ENCODE measurements at regions of chr16 and their contacts with region 1.

Region 1: DNA sequence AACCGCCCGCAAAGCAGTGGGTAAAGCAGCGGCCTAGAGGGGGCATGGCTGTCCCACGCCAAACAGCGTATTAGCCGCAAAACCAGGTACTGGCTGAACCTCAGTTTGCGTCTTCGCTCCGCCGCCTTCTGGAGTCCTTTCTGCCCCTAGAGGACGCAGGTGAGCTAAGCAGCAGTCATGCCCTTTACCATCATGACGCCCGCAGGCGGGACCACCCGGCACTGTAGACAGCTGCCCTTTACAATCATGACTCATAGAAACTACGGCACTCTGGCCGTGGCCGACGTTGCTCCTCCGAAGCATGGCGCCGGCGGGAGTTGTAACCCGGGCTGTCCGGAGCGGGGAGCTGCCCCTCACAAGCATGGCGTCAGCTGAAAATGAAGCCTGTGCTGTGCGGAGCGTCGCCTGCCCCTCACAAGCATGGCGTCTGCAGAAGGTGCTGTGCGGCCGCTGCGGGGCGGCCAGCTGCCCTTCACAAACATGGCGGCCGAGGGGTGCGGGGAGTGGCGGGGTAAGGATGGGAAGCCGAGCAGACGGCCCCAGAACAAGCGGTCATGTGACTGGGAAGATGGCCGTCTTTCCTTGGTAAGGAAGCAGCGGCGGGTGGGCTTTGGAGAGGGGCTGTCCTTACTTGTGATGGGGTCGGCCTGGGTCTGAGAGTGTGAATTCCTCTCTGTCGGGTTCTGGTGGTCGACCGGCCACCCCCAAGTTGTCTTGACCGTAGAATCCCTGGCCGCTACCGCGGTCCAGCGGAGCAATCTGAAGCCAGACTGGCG is at the start of gene VPS35L:
- DNase-seq: peak; percentile 97
- ATAC-seq: peak; percentile 98
- H3K4me3 Mint-ChIP-seq: peak within 1 kb of the TSS; percentile 85
- H3K27ac Mint-ChIP-seq: peak within 1 kb of the TSS; percentile 94
- H3K4me1 Mint-ChIP-seq: peaks cover 19% of the 10 kb centered on the region
- H3K27me3 Mint-ChIP-seq: no peaks in the 10 kb centered on the region
- total RNA-seq, gene VPS35L: 61.5 to 65.1 TPM

Region 2: DNA sequence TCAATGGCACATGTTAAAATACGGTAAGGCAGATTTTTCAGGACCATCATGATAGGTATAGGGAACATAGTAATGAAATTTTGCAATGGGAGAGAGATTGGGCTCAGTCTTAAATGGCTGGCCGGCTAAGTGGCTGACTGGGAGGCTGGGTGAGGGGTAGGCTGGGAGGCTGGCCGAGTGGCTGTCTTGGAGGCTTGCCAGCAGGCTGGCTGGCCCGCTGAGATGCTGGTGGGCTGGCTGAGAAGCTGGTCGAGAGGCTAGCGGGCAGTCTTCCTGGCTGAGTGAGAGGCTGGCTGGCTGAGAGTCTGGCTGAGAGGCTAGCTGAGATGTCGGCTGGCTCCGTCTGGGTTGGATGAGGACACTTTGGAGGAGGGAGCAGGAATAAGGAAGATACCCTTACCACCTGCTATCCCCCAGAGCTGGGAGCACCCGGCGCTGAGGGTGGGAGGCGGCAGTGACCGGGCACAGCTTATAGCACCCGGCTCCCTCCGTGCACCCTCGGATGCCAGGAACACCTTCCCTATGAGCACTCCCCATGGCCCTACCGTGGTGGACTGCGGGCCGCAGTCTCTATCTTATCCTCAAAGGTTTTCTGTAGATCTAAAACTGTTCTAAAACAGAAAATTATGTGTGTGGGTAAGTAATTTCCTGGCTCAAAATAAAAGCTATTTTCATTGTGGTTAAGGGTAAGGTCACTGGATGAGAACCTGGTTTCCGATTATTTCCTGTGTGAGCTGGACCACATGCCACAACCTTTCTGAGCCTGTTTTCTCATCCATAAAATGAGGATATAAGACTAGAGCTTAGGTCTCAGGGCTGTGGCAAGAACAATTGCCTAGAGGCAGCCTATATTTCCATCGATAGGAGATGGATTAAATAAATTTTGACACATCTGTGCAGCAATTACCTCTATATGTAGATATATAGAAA is 172.2 kb before region 1 on chr16:
- CTCF ChIA-PET with region 1: no interaction called
- POLR2A ChIA-PET with region 1: no interaction called
- DNase-seq: peak; percentile 26
- ATAC-seq: peak; percentile 51
- H3K4me3 Mint-ChIP-seq: peak overlapping the region; percentile 15
- H3K27ac Mint-ChIP-seq: no peak overlapping the region
- H3K4me1 Mint-ChIP-seq: peaks cover 43% of the 10 kb centered on the region
- H3K27me3 Mint-ChIP-seq: peaks cover 29% of the 10 kb centered on the region

Region 3: GRCh38 chr16:19502395-19503131 is 52.8 kb before region 1 on chr16:
- CTCF ChIA-PET with region 1: interaction called, 17 read pairs
- POLR2A ChIA-PET with region 1: no interaction called
- DNase-seq: peak; percentile 82
- ATAC-seq: peak; percentile 79
- H3K4me3 Mint-ChIP-seq: no peak overlapping the region
- H3K27ac Mint-ChIP-seq: no peak overlapping the region
- H3K4me1 Mint-ChIP-seq: peaks cover 7% of the 10 kb centered on the region
- H3K27me3 Mint-ChIP-seq: no peaks in the 10 kb centered on the region

Region 4: GRCh38 chr16:19528666-19529065 is 26.7 kb before region 1 on chr16:
- CTCF ChIA-PET with region 1: interaction called, 43 read pairs
- POLR2A ChIA-PET with region 1: interaction called, 34 read pairs
- DNase-seq: no peak
- ATAC-seq: no peak
- H3K4me3 Mint-ChIP-seq: no peak overlapping the region
- H3K27ac Mint-ChIP-seq: no peak overlapping the region
- H3K4me1 Mint-ChIP-seq: peaks cover 16% of the 10 kb centered on the region
- H3K27me3 Mint-ChIP-seq: no peaks in the 10 kb centered on the region

Region 5: DNA sequence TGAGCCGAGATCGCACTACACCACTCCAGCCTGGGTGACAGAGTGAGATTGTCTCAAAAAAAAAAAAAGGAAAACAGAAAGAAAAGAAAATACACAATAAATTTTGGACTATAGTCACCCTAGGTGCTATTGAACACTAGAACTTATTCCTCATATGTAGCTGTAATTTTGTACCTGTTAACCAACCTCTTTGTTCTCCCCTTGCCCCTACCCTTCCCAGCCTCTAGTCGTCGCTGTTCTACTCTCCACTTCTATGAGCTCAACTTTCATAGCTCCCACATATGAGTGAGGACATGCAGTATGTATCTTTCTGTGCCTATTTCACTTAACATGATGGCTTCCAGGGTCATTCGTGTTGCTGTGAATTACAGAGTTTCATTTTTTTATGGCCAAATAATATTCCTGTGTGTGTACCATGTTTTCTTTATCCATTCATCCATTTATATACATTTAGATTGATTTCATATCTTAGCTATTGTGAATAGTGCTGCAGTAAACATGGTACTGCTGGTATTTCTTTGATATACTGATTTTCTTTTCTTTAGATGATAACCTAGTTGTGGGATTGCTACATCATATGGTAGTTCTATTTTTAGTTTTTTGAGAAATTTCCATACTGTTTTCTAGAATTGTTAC is 28.4 kb after region 1 on chr16:
- CTCF ChIA-PET with region 1: interaction called, 10 read pairs
- POLR2A ChIA-PET with region 1: no interaction called
- DNase-seq: peak; percentile 36
- ATAC-seq: peak; percentile 64
- H3K4me3 Mint-ChIP-seq: no peak overlapping the region
- H3K27ac Mint-ChIP-seq: no peak overlapping the region
- H3K4me1 Mint-ChIP-seq: no peaks in the 10 kb centered on the region
- H3K27me3 Mint-ChIP-seq: no peaks in the 10 kb centered on the region

Region 6: GRCh38 chr16:19632916-19633315 is 77.6 kb after region 1 on chr16:
- CTCF ChIA-PET with region 1: no interaction called
- POLR2A ChIA-PET with region 1: no interaction called
- DNase-seq: no peak
- ATAC-seq: no peak
- H3K4me3 Mint-ChIP-seq: no peak overlapping the region
- H3K27ac Mint-ChIP-seq: no peak overlapping the region
- H3K4me1 Mint-ChIP-seq: no peaks in the 10 kb centered on the region
- H3K27me3 Mint-ChIP-seq: no peaks in the 10 kb centered on the region

Region 7: DNA sequence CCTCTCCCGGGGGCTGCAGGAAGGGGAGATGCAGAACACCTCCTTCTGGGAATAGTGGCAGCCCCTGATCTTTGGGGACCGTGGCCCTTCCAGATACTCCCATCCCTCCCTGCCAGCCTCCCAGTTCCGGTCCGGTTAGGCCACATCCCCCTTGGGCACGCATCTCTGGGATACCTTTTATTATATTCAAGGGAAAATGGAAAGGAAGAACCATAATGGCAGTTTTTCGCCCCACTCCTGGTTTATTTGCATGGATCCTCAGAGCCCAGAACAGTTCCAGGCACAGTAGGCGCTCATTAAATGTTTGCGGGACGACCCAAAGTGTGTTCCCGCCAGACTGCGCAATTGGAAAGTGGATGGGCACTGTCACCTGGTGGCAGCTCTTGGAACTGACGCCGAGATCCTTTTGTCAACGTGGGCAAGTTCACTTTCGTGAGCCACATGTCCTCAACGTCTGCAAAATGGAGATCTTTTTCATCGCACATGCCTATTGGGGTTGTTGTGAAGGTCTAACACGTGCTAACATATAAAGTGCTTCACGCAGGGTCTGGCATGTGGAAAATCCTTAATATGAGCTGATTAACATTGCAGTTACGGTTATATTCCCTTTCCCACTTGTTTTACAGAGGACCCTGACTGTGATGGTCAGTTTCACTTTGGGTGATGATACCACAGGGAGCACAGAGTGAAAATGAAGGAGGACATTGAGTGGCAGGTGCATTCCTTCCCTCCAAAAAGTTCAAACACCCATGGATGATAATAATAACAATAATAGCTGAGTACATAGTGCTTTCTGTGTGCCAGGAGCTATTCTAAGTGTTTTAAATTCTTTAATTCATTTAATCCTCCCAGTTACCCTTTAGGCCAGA is 331.0 kb after region 1 on chr16:
- CTCF ChIA-PET with region 1: interaction called, 44 read pairs
- POLR2A ChIA-PET with region 1: interaction called, 4 read pairs
- DNase-seq: peak; percentile 86
- ATAC-seq: peak; percentile 64
- H3K4me3 Mint-ChIP-seq: peak overlapping the region; percentile 59
- H3K27ac Mint-ChIP-seq: no peak overlapping the region
- H3K4me1 Mint-ChIP-seq: peaks cover 20% of the 10 kb centered on the region
- H3K27me3 Mint-ChIP-seq: peaks cover 31% of the 10 kb centered on the region

Region 8: DNA sequence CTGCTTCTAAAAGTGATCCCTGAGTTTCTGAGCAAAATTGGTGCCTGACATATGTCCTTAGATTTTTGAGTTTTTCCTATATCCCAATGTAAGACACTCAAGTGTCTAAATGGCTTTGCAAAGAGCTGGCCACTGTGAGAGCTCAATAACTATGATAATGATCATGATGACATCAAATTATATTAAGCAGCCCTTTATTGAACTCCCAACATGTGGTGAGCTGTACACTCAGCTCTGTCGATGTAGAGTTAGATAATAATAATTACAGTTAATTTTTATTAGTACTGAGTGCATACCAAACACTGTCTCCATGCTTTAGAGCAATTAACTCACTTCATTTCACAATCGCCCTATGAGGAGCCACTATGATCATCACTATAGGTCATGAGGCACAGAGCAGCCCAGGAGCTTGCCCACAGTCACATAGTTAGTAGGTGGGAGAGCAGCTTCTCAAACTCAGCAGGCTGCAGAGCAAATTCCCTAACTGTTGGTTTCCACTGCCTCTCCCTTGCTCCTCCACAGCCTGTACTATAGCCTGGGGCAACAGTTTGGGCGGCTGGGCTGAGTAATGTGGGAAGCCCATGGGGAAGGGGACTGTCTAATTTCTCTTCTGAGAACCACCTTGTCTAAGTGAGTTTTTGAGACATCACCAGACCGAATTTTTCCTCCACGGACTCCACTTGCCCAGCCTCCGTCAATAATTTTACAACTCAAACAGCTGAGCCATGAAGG is 591.6 kb after region 1 on chr16:
- CTCF ChIA-PET with region 1: no interaction called
- POLR2A ChIA-PET with region 1: no interaction called
- DNase-seq: no peak
- ATAC-seq: no peak
- H3K4me3 Mint-ChIP-seq: no peak overlapping the region
- H3K27ac Mint-ChIP-seq: no peak overlapping the region
- H3K4me1 Mint-ChIP-seq: no peaks in the 10 kb centered on the region
- H3K27me3 Mint-ChIP-seq: no peaks in the 10 kb centered on the region

Measured in activated CD8-positive, alpha-beta T cell treated with anti-CD3 and anti-CD28 coated beads, Interleukin-2, amount 10 ng/mL, durations not matched to agents 7 days and 5 days (primary cell).